OCI-LY7 (cell line): ENCODE measurements at regions of chr4 and their contacts with region 1.

Region 1: DNA sequence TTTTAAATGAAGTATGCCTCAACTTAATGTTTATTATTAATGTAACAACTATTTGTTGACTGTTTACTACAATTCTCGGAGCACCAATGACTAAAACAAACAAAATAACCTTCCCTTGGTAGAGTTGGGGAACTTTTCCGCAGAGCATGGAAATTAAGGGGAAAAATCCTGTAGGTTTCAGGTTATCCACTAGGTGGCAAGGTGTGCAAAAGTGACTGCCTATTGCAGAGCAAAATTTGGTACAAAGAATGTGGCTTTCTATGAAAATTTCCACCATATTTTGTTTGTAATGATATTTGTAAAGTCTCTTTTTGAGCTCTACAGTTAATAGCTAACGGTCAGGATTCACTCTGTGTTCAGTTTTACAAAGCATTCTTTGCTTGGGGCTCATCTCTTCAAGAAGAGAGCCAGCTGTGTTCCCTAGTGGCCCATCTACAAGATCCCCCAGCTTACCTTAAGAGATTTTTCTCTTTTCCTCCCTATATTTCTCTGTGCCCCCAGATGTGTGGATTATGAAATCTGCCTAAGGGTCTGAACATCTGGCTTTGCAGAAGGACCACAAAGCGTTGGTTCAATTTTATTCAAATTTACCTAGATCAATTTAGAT is 61.1 kb downstream of the FBXO8 start:
- DNase-seq: peak; percentile 47
- H3K4me3 ChIP-seq: no peak overlapping the region
- H3K27ac ChIP-seq: no peak overlapping the region
- H3K4me1 ChIP-seq: no peaks in the 10 kb centered on the region
- CTCF ChIP-seq: peak; percentile 86

Region 2: DNA sequence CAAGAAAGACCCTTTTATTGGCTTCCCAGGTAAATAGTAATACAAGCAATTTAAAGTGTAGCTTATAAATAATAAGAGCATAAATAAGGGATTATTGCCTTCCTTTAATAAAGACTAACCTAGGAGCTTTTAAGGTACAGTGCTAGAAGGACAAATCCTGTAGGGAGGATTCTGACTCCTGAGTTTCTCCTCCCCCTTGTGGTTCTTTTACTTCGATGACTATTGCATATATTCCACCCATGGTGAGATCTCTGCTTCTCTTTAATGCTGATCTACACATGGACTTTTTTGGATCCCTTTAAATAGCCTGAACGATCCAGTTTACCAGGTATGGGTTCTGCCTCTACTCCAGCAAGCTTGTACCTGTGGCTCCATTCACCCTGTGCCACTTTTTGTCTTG is 1051.3 kb before region 1 on chr4:
- CTCF ChIA-PET with region 1: no interaction called
- POLR2A ChIA-PET with region 1: no interaction called
- intact Hi-C with region 1: no loop called
- DNase-seq: peak; percentile 36
- H3K4me3 ChIP-seq: peak overlapping the region; percentile 79
- H3K27ac ChIP-seq: peak overlapping the region; percentile 84
- H3K4me1 ChIP-seq: peaks cover 41% of the 10 kb centered on the region
- CTCF ChIP-seq: peak; percentile 54; the same call in 1 of the 2 replicates

Region 3: GRCh38 chr4:174107746-174108354 is 114.5 kb before region 1 on chr4:
- CTCF ChIA-PET with region 1: no interaction called
- POLR2A ChIA-PET with region 1: no interaction called
- intact Hi-C with region 1: no loop called
- DNase-seq: no peak
- H3K4me3 ChIP-seq: no peak overlapping the region
- H3K27ac ChIP-seq: no peak overlapping the region
- H3K4me1 ChIP-seq: no peaks in the 10 kb centered on the region
- CTCF ChIP-seq: no peak

Region 4: GRCh38 chr4:174318829-174319764 is 96.7 kb after region 1 on chr4:
- CTCF ChIA-PET with region 1: interaction called, 3 read pairs
- POLR2A ChIA-PET with region 1: no interaction called
- intact Hi-C with region 1: loop called (anchors 1 kb)
- DNase-seq: peak; percentile 50
- H3K4me3 ChIP-seq: no peak overlapping the region
- H3K27ac ChIP-seq: no peak overlapping the region
- H3K4me1 ChIP-seq: no peaks in the 10 kb centered on the region
- CTCF ChIP-seq: peak; percentile 97